ENCODE measurements at regions of chr13 and their contacts with region 1.

Region 1: DNA sequence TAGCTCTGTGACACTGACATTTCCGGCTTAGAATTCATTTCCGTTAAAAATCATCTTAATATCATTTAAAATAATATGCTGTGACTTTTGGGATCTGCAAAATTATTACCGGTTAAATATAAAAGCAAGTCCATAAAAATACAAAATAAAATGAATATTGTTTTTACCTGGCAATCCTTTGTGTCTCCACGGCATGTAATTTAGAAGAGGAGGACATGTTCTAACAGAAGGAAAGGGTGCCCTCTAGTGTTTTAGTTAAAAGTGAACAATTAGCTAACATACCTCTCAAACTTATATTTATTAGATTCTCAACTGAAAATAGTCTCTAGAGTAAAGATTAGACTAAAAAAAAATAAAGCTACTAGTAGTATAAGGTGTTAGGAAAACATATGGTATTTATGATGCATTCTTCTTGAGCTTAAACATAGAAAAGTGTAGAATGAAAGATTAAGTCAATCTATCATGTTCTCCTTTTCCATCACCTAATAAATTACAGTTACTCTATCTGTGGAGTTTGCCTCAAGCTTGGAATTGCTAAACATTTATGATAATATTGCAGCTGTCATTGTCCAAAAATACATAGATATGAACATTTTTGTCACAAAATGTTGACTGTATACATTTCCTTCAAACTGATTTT is 676.7 kb upstream of the SPRY2 start:
- DNase-seq: peak; percentile 25
- ATAC-seq: peak; percentile 49
- H3K4me3 ChIP-seq: no peak overlapping the region
- H3K27ac ChIP-seq: no peak overlapping the region
- H3K4me1 ChIP-seq: no peaks in the 10 kb centered on the region
- H3K27me3 ChIP-seq: no peaks in the 10 kb centered on the region
- CTCF ChIP-seq: peak; percentile 47
- POLR2A ChIP-seq: no peak
- RAD21 ChIP-seq: peak; percentile 54

Region 2: DNA sequence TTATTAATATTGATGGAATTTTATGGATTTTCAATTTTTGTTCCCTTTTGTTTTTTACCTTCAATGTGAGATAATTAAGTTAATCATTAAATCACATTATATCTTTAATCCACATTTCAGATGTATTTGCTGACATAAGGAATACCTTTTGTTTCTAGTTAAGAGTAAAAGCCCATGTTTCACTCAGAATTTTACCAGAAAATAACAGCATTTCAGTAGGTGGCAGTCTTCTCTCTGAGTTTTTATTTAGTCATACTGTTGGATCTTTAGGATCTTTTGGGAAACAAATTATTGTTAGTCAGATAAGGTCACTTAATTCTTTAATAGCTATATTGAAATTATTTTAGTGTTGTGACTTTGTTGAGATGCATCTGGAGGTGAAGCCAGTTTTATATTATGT is 1468.7 kb before region 1 on chr13:
- CTCF ChIA-PET with region 1: no interaction called
- POLR2A ChIA-PET with region 1: no interaction called
- dilution Hi-C with region 1: no loop called
- in situ Hi-C with region 1: no loop called
- intact Hi-C with region 1: loop called (anchors 1 kb)
- DNase-seq: peak; percentile 11
- ATAC-seq: peak; percentile 75
- H3K4me3 ChIP-seq: no peak overlapping the region
- H3K27ac ChIP-seq: no peak overlapping the region
- H3K4me1 ChIP-seq: peaks cover 2% of the 10 kb centered on the region; the same call in 1 of the 2 replicates
- H3K27me3 ChIP-seq: no peaks in the 10 kb centered on the region
- CTCF ChIP-seq: peak; percentile 43
- POLR2A ChIP-seq: no peak
- RAD21 ChIP-seq: peak; percentile 36

Region 3: DNA sequence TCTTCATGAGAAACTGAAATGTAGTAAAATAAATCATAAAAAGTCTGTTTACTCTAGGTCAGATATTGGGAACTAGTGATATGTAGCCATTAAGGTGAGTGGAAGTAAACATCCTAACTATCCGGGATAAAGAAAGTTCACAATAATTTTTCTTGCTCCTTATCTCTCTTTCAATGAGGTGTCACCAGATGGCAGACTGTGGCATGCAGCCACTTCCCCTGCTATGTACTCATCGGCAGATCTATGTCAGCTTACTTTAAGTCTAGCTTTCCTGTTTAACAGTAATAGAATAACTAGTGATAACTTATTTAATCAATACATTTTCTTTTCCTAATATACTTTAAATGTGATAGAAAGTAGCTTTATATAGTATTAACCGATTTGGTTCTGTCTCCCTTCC is 1354.8 kb before region 1 on chr13:
- CTCF ChIA-PET with region 1: no interaction called
- POLR2A ChIA-PET with region 1: no interaction called
- dilution Hi-C with region 1: no loop called
- in situ Hi-C with region 1: no loop called
- intact Hi-C with region 1: loop called (anchors 10 kb)
- DNase-seq: no peak
- ATAC-seq: no peak
- H3K4me3 ChIP-seq: no peak overlapping the region
- H3K27ac ChIP-seq: no peak overlapping the region
- H3K4me1 ChIP-seq: no peaks in the 10 kb centered on the region
- H3K27me3 ChIP-seq: no peaks in the 10 kb centered on the region; the same call in 1 of the 2 replicates
- CTCF ChIP-seq: no peak
- POLR2A ChIP-seq: no peak
- RAD21 ChIP-seq: no peak

Region 4: DNA sequence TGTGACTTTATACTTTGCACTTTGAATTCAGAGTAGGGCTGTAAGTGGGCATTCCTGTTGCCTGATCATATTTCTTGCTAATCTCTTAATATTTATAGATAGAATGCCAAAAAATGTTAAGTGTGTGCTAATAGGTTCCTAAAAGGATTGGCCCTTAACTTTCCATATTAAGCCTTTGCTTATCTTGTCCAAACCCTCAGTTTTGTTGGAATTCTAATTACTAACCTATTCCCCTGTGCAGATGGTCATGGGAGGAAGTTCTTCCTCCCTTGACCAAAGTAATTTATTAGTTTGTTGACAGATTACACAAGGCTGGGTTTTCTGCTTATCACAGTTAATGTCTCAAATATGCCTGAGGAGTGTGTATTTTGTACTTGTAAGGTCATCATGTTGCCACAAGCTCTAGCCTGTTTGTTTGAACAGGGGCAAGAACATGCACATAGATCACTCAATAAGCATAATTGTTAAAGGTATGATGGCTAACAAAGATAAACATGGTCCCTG is 135.6 kb before region 1 on chr13:
- CTCF ChIA-PET with region 1: no interaction called
- POLR2A ChIA-PET with region 1: no interaction called
- dilution Hi-C with region 1: no loop called
- in situ Hi-C with region 1: no loop called
- intact Hi-C with region 1: no loop called
- DNase-seq: no peak
- ATAC-seq: no peak
- H3K4me3 ChIP-seq: no peak overlapping the region
- H3K27ac ChIP-seq: no peak overlapping the region
- H3K4me1 ChIP-seq: no peaks in the 10 kb centered on the region
- H3K27me3 ChIP-seq: no peaks in the 10 kb centered on the region
- CTCF ChIP-seq: no peak
- POLR2A ChIP-seq: no peak
- RAD21 ChIP-seq: no peak

Region 5: DNA sequence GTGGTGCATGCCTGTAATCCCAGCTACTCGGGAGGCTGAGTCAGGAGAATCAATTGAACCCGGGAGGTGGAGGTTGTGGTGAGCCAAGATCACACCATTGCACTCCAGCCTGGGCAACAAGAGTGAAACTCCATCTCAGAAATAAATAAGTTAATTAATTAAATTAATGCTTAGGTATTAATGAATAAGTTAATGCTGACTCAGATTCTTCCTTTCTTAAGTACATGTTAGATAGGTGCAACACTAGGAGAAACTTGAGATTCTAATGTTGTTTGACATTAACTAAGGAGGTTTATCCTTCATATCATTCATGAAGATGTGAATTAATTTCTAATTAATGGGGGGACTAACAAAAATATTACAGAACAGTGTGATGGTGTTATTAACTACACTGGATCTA is 135.8 kb after region 1 on chr13:
- CTCF ChIA-PET with region 1: no interaction called
- POLR2A ChIA-PET with region 1: no interaction called
- dilution Hi-C with region 1: no loop called
- in situ Hi-C with region 1: no loop called
- intact Hi-C with region 1: no loop called
- DNase-seq: no peak
- ATAC-seq: no peak
- H3K4me3 ChIP-seq: no peak overlapping the region
- H3K27ac ChIP-seq: no peak overlapping the region
- H3K4me1 ChIP-seq: no peaks in the 10 kb centered on the region
- H3K27me3 ChIP-seq: no peaks in the 10 kb centered on the region
- CTCF ChIP-seq: no peak
- POLR2A ChIP-seq: no peak
- RAD21 ChIP-seq: no peak